Activated CD4-positive, alpha-beta T cell treated with anti-CD3 and anti-CD28 coated beads, Interleukin-2, amount 10 ng/mL, durations not matched to agents 24 days and 14 days (primary cell): ENCODE measurements at regions of chr2 and their contacts with region 1.

Region 1: GRCh38 chr2:189661148-189661956 is at the start of gene ASNSD1:
- DNase-seq: peak; percentile 100
- H3K4me3 Mint-ChIP-seq: no peak within 1 kb of the TSS
- H3K27ac Mint-ChIP-seq: no peak within 1 kb of the TSS
- H3K4me1 Mint-ChIP-seq: peaks cover 42% of the 10 kb centered on the region
- H3K27me3 Mint-ChIP-seq: no peaks in the 10 kb centered on the region
- total RNA-seq, gene ASNSD1: 59.7 and 63.7 TPM in 2 replicates

Region 2: GRCh38 chr2:188786368-188786841 is 874.9 kb before region 1 on chr2:
- intact Hi-C with region 1: no loop called
- DNase-seq: no peak
- H3K4me3 Mint-ChIP-seq: no peak overlapping the region
- H3K27ac Mint-ChIP-seq: no peak overlapping the region
- H3K4me1 Mint-ChIP-seq: no peaks in the 10 kb centered on the region
- H3K27me3 Mint-ChIP-seq: no peaks in the 10 kb centered on the region

Region 3: GRCh38 chr2:189641590-189641989 is 19.8 kb before region 1 on chr2:
- intact Hi-C with region 1: loop called (anchors 1 kb)
- DNase-seq: no peak
- H3K4me3 Mint-ChIP-seq: no peak overlapping the region
- H3K27ac Mint-ChIP-seq: peak overlapping the region; percentile 9
- H3K4me1 Mint-ChIP-seq: peaks cover 9% of the 10 kb centered on the region
- H3K27me3 Mint-ChIP-seq: peaks cover 2% of the 10 kb centered on the region

Region 4: GRCh38 chr2:189698020-189698887 is 36.9 kb after region 1 on chr2:
- intact Hi-C with region 1: loop called (anchors 1 kb)
- DNase-seq: peak; percentile 81
- H3K4me3 Mint-ChIP-seq: no peak overlapping the region
- H3K27ac Mint-ChIP-seq: no peak overlapping the region
- H3K4me1 Mint-ChIP-seq: no peaks in the 10 kb centered on the region
- H3K27me3 Mint-ChIP-seq: no peaks in the 10 kb centered on the region

Region 5: DNA sequence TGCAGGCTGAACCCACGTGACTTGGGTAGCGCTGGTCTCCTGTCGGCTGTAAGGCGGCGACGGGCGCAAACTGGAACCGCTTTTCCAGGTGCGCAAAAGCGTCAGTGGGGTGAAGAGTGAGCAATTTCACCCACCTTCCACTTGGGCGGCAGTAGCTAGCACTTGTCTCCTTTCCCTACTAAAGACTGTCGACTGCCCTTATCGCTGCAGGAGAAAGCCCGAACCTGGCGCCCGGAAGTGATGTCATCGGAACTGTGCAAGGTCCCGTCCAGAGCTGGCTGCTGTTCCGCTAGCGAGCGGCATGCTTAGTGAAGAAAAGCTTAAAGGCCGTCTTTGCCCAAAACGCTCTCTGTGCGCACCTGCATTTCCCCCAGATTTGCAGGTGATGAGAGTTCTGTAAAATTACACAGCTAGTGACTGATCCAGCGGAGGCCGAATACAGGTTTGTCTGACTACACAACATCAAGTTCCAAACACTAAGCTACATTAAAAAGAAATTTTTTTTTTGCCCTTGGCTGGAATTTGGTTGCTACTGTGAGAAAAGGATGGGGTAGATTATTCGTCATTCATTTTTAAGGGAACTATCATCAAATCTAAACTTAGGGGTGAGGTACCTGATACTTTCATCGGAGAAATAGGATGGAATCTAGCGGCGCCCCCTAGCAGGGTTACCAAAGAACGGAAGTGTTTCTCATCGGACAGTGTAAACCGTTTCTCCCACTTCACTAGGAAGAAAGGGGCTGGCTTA is 101.4 kb after region 1 on chr2 and contains the start of gene OSGEPL1:
- intact Hi-C with region 1: loop called (anchors 1 kb)
- DNase-seq: peak; percentile 97
- H3K4me3 Mint-ChIP-seq: peak within 1 kb of the TSS; percentile 97
- H3K27ac Mint-ChIP-seq: peak within 1 kb of the TSS; percentile 98
- H3K4me1 Mint-ChIP-seq: peaks cover 12% of the 10 kb centered on the region
- H3K27me3 Mint-ChIP-seq: no peaks in the 10 kb centered on the region
- total RNA-seq, gene OSGEPL1: 11.1 and 12.2 TPM in 2 replicates

Region 6: DNA sequence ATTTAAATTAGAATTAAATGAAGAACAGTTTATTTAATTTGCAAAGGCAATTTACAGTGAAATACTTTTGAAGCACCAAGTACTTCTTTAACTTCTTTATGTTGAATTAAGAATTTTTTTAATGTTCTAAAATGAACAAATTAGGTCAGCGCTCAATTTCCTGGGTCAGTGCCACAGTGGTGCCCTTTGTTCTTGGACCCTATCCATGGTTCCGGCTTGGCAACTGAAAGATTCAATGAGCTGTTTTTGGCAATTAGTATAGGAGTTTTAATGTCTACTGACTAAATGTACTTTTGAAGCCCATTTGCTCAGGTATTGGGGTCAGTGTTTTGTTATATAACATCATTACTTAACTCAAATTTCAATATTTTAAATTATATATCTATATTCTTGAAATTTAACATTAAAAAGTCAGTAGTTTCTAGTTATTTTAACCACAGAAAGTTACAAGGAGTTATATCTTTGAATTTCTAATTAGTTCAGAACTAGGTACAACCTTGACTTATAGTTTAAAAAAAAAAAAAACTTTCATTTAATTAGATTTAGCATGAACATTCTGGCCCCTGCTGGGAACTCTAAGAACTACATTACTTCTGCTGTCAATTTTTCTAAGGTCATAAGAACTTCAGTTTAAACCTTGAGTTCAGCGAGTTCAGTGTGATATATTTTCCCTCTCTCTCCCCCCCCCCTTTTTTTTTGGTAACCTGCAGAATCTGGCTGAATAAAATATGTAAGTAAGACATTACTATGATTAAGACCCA is 408.8 kb after region 1 on chr2:
- intact Hi-C with region 1: loop called (anchors 1 kb)
- DNase-seq: peak; percentile 75
- H3K4me3 Mint-ChIP-seq: no peak overlapping the region
- H3K27ac Mint-ChIP-seq: no peak overlapping the region
- H3K4me1 Mint-ChIP-seq: no peaks in the 10 kb centered on the region
- H3K27me3 Mint-ChIP-seq: peaks cover 5% of the 10 kb centered on the region

Region 7: DNA sequence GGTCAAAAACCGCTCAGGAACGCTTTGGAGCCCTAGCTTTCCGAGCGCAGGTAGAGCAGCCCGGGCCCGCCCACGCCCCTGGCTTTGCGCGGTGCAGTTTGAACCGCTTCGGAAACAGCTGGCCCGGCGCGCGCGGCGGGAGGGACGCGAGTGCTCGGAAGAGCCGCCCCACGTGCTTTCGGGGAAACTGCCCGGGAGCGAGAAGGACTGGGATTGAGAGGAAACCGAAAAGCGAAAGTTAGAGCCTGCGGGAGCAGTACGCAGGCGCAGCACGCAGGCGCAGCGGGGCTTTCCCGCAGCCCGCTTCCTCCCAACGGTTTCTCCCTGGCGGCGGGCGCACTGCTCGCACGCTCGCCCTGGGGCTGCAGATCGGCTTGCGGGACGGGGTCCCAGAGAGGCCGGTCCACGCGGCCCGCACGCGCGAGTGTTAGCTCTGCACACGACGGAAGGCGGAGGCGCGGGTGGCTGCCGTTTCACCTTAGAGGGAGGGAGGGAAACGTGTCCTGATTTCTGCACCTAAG is 1358.9 kb after region 1 on chr2:
- intact Hi-C with region 1: loop called (anchors 2 kb)
- DNase-seq: peak; percentile 99
- H3K4me3 Mint-ChIP-seq: no peak overlapping the region
- H3K27ac Mint-ChIP-seq: no peak overlapping the region
- H3K4me1 Mint-ChIP-seq: peaks cover 31% of the 10 kb centered on the region
- H3K27me3 Mint-ChIP-seq: peaks cover 2% of the 10 kb centered on the region